ENCODE measurements at regions of chr11 and their contacts with region 1.

Region 1: GRCh38 chr11:60899046-60899936 is 7.1 kb downstream of the PRPF19 start:
- DNase-seq: no peak
- H3K4me3 ChIP-seq: no peak overlapping the region
- H3K27ac ChIP-seq: no peak overlapping the region
- H3K4me1 ChIP-seq: peaks cover 26% of the 10 kb centered on the region
- H3K27me3 ChIP-seq: no peaks in the 10 kb centered on the region
- CTCF ChIP-seq: peak; percentile 98

Region 2: GRCh38 chr11:60831143-60831500 is 68.2 kb before region 1 on chr11:
- intact Hi-C with region 1: loop called (anchors 5 kb)
- DNase-seq: peak; percentile 83
- H3K4me3 ChIP-seq: no peak overlapping the region
- H3K27ac ChIP-seq: no peak overlapping the region
- H3K4me1 ChIP-seq: peaks cover 8% of the 10 kb centered on the region
- H3K27me3 ChIP-seq: no peaks in the 10 kb centered on the region
- CTCF ChIP-seq: peak; percentile 98

Region 3: GRCh38 chr11:60944490-60945294 is 45.4 kb after region 1 on chr11:
- intact Hi-C with region 1: no loop called
- DNase-seq: no peak
- H3K4me3 ChIP-seq: no peak overlapping the region
- H3K27ac ChIP-seq: no peak overlapping the region
- H3K4me1 ChIP-seq: peaks cover 54% of the 10 kb centered on the region
- H3K27me3 ChIP-seq: no peaks in the 10 kb centered on the region
- CTCF ChIP-seq: peak; percentile 26

Measured in left ventricle myocardium inferior (tissue), 1 donor.